ENCODE measurements at regions of chr18 and their contacts with region 1.

Region 1: GRCh38 chr18:70808481-70809056 is 519.7 kb downstream of the SOCS6 start:
- DNase-seq: no peak
- H3K4me3 ChIP-seq: no peak overlapping the region
- H3K27ac ChIP-seq: no peak overlapping the region
- H3K4me1 ChIP-seq: no peaks in the 10 kb centered on the region
- H3K27me3 ChIP-seq: no peaks in the 10 kb centered on the region
- CTCF ChIP-seq: no peak

Region 2: DNA sequence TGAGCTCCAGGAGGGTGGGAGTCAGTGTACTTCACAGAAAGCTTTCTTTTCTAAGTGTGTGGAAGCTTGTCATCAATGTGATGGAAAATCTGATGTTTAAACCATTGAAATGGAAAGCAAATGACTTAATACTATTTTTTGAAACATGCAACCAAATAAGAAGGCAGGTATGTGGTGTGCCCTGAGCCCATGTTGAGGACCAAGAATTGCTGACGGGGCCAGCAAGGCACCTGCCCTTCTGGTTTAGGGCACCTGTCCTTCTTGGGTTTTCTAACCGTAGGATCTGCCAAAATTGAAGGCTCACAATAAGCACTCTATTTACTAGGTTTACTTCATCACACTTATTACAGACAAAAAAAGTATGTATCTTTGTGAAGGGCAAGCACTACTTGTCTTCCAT is 18.0 kb after region 1 on chr18:
- intact Hi-C with region 1: loop called (anchors 1 kb)
- DNase-seq: no peak
- H3K4me3 ChIP-seq: no peak overlapping the region
- H3K27ac ChIP-seq: no peak overlapping the region
- H3K4me1 ChIP-seq: no peaks in the 10 kb centered on the region
- H3K27me3 ChIP-seq: no peaks in the 10 kb centered on the region
- CTCF ChIP-seq: no peak

Measured in ascending aorta (tissue), 2 donors.